ENCODE measurements at regions of chr1 and their contacts with region 1.

Region 1: GRCh38 chr1:209633335-209633997 is 18.8 kb downstream of the LAMB3 start:
- DNase-seq: peak; percentile 38
- H3K4me3 ChIP-seq: no peak overlapping the region
- CTCF ChIP-seq: no peak

Region 2: GRCh38 chr1:209485167-209485566 is 148.3 kb before region 1 on chr1:
- CTCF ChIA-PET with region 1: no interaction called
- POLR2A ChIA-PET with region 1: no interaction called
- DNase-seq: no peak
- H3K4me3 ChIP-seq: no peak overlapping the region
- CTCF ChIP-seq: no peak

Region 3: GRCh38 chr1:209651148-209651547 is 17.7 kb after region 1 on chr1:
- CTCF ChIA-PET with region 1: interaction called, 39 read pairs
- POLR2A ChIA-PET with region 1: no interaction called
- DNase-seq: no peak
- H3K4me3 ChIP-seq: no peak overlapping the region
- CTCF ChIP-seq: no peak